Activated CD4-positive, alpha-beta memory T cell treated with anti-CD3 and anti-CD28 coated beads for 36 hours (primary cell): ENCODE measurements at regions of chr3 and their contacts with region 1.

Region 1: GRCh38 chr3:194481103-194481502 is 5.7 kb downstream of the ATP13A3 start:
- DNase-seq: no peak
- H3K4me3 Mint-ChIP-seq: no peak overlapping the region
- H3K27ac Mint-ChIP-seq: peak overlapping the region; percentile 67
- H3K4me1 Mint-ChIP-seq: peaks cover 46% of the 10 kb centered on the region
- H3K27me3 Mint-ChIP-seq: no peaks in the 10 kb centered on the region

Region 2: DNA sequence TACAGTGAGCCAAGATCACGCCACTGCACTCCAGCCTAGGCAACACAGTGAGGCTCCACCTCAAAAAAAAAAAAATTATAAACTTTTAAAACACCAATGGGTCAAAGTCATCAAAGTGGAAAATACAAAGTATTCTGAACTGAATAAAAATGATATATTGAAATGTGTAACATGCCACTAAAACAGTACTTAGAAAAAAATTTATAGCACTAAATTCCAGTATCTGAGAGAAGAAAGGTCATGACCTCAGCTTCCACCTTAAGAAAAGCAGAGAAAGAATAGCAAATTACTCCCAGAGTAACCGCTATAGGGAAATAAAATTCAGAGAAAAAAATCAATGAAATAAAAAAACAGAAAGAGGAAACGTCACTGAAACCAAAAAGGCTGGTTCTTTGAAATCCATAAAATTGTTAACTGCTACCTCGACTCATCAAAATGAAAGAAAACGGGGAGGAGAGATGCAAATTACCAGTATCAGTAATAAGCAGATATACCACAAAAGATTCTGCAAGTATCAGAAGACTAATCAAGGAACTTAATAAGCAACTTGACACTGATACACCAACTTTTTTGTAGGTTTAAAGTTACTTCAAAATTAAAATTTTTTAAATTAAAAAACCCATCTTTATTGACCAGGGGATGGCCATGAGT is 15.1 kb before region 1 on chr3:
- CTCF ChIA-PET with region 1: interaction called, 37 read pairs
- POLR2A ChIA-PET with region 1: interaction called, 3 read pairs
- intact Hi-C with region 1: loop called (anchors 1 kb)
- DNase-seq: no peak
- H3K4me3 Mint-ChIP-seq: peak overlapping the region; percentile 4
- H3K27ac Mint-ChIP-seq: peak overlapping the region; percentile 69
- H3K4me1 Mint-ChIP-seq: peaks cover 32% of the 10 kb centered on the region
- H3K27me3 Mint-ChIP-seq: no peaks in the 10 kb centered on the region

Region 3: GRCh38 chr3:194573691-194574437 is 92.8 kb after region 1 on chr3:
- CTCF ChIA-PET with region 1: interaction called, 17 read pairs
- POLR2A ChIA-PET with region 1: no interaction called
- intact Hi-C with region 1: no loop called
- DNase-seq: peak; percentile 64
- H3K4me3 Mint-ChIP-seq: no peak overlapping the region
- H3K27ac Mint-ChIP-seq: no peak overlapping the region
- H3K4me1 Mint-ChIP-seq: peaks cover 28% of the 10 kb centered on the region
- H3K27me3 Mint-ChIP-seq: peaks cover 22% of the 10 kb centered on the region